OCI-LY7 (cell line): ENCODE measurements at regions of chr1 and their contacts with region 1.

Region 1: DNA sequence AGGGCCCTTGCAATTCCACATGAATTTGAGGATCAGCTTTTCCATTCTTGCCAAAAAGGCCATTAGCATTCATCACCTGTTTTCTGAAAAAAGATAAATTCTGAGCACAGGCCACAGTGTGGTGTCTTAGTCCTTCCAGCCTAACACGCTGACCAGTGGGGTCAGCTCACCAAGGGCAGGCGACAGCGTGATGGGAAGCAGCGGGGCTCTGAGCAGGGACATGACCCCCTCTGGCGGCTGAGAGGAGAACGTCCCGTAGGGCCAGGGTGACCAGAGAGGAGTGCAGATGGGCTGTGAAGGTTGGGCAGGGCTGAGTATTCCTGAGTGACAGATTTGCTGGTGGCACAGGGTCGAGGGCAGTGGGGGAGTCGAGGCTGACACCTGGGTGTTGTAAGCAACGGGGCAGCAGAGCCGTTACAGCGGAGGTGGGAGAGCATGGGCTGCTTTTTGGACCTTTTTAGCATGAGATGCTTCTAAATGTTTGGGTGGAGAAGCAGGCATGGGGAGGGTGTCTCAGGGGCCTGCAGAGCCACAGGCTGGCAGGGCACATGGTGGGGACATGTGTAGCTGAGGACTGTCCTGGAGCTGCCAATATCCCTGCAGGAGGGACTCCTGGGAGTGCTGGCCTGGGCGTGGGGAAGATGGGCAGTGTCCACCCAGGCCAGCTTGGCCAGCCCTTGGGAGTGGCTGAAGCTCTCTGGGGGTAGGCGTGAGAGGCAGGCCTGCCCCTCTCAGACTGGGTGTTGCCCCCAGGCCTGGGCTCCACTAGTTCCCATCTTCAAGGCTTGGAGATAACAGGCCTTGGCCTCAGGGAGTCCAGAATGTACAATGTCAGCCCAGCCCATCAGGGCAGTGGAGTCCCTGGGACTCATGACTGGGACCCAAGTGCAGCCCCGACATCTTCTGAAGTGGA is 8.6 kb upstream of the CALML6 start:
- DNase-seq: peak; percentile 80
- H3K4me3 ChIP-seq: no peak overlapping the region
- H3K27ac ChIP-seq: peak overlapping the region; percentile 78
- H3K4me1 ChIP-seq: peaks cover 48% of the 10 kb centered on the region
- CTCF ChIP-seq: peak; percentile 97

Region 2: GRCh38 chr1:1721201-1721600 is 185.2 kb before region 1 on chr1:
- CTCF ChIA-PET with region 1: no interaction called
- POLR2A ChIA-PET with region 1: interaction called, 4 read pairs
- intact Hi-C with region 1: loop called (anchors 5 kb)
- DNase-seq: no peak
- H3K4me3 ChIP-seq: no peak overlapping the region
- H3K27ac ChIP-seq: no peak overlapping the region
- H3K4me1 ChIP-seq: no peaks in the 10 kb centered on the region
- CTCF ChIP-seq: no peak

Region 3: GRCh38 chr1:1833916-1834325 is 72.5 kb before region 1 on chr1:
- CTCF ChIA-PET with region 1: no interaction called
- POLR2A ChIA-PET with region 1: interaction called, 6 read pairs
- intact Hi-C with region 1: loop called (anchors 2 kb)
- DNase-seq: peak; percentile 98
- H3K4me3 ChIP-seq: peak overlapping the region; percentile 60
- H3K27ac ChIP-seq: peak overlapping the region; percentile 97
- H3K4me1 ChIP-seq: peaks cover 75% of the 10 kb centered on the region
- CTCF ChIP-seq: no peak

Region 4: DNA sequence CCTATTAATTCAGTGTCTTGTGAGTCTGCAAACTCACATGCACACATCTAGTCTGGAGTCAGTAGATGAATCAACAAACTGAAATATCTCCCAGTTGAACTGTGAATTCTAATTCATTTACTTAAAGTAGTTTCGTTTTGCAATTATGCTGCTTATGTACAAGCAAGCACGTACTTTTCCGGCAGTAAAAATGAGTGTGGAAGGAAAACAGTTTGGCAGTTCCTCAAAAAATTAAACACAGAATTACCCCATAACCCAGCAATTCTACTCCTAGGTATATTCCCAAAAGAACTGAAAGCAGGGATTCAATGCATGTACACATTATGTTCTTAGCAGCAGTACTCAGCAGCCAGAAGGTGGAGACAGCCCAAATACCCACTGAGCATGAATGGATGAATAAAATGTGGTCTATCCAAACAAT is 64.9 kb before region 1 on chr1:
- CTCF ChIA-PET with region 1: no interaction called
- POLR2A ChIA-PET with region 1: no interaction called
- intact Hi-C with region 1: loop called (anchors 2 kb)
- DNase-seq: peak; percentile 46
- H3K4me3 ChIP-seq: peak overlapping the region; percentile 56
- H3K27ac ChIP-seq: peak overlapping the region; percentile 97
- H3K4me1 ChIP-seq: peaks cover 87% of the 10 kb centered on the region
- CTCF ChIP-seq: peak; percentile 66